B cell (primary cell): ENCODE measurements at regions of chr9 and their contacts with region 1.

Region 1: GRCh38 chr9:126611592-126612325 is 2.0 kb upstream of the LMX1B start:
- DNase-seq: peak; percentile 82
- ATAC-seq: peak; percentile 80
- H3K4me3 ChIP-seq: peak overlapping the region in 3 of 5 experiments; percentile 12 to 52 (median 16)
- H3K4me3 Mint-ChIP-seq: peak overlapping the region; percentile 76
- H3K27ac ChIP-seq: no peak overlapping the region
- H3K27ac Mint-ChIP-seq: peak overlapping the region; percentile 0
- H3K4me1 ChIP-seq: peaks cover 35 to 48% of the 10 kb centered on the region in 2 donors
- H3K4me1 Mint-ChIP-seq: peaks cover 31% of the 10 kb centered on the region
- H3K27me3 ChIP-seq: peaks cover 0 to 77% (median 45%) of the 10 kb centered on the region in 4 experiments
- H3K27me3 Mint-ChIP-seq: peaks cover 58% of the 10 kb centered on the region
- CTCF ChIP-seq: peak; percentile 89

Region 2: DNA sequence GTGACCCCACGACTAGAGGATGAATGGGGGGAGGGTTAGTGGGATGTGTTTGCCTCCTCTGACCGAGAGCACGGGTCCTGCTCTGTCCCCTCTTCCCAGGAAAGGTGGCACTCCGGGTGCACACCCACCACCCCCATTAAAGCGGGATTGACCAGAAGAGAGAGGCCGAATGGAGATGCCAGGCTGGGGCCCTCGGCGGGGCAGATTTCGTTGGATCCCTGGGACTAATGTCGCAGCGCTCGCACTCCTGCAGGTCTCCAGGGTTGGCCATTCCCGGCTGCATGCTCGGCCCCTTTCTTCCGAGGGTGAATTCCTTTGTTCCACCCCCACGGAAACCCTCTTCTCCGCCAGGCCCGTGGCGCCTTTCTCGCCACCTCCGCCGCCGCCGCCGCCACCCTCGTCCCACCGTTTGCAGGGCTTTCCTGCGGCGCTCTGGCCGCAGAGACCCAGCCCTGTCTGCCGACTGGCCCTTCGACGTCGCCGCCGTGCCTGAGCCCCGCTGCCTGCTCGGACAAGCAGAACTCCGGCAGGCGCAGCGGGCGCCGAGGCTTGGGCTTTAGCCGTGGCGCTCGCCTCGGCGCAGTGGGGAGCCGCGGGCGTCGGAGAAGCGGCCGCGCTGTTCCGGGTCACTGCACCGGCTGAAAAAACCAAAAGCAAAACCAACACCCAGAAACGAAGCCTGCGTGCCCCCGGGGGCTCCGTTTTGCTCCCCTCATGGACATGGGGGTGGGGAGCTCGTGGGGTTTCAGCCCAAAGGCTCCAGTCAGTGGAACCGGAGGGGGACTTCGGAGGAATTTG is 13.8 kb after region 1 on chr9:
- CTCF ChIA-PET with region 1: interaction called, 5 read pairs
- POLR2A ChIA-PET with region 1: no interaction called
- intact Hi-C with region 1: loop called (anchors 2 kb)
- DNase-seq: peak; percentile 53
- ATAC-seq: peak; percentile 37
- H3K4me3 ChIP-seq: peak overlapping the region in 4 of 5 experiments; percentile 39 to 63 (median 54)
- H3K4me3 Mint-ChIP-seq: peak overlapping the region; percentile 89
- H3K27ac ChIP-seq: no peak overlapping the region
- H3K27ac Mint-ChIP-seq: no peak overlapping the region
- H3K4me1 ChIP-seq: peaks cover 30 to 45% of the 10 kb centered on the region in 2 donors
- H3K4me1 Mint-ChIP-seq: peaks cover 16% of the 10 kb centered on the region
- H3K27me3 ChIP-seq: peaks cover 0 to 97% (median 71%) of the 10 kb centered on the region in 4 experiments
- H3K27me3 Mint-ChIP-seq: peaks cover 72% of the 10 kb centered on the region
- CTCF ChIP-seq: no peak

Region 3: GRCh38 chr9:126630458-126631237 is 18.9 kb after region 1 on chr9:
- CTCF ChIA-PET with region 1: no interaction called
- POLR2A ChIA-PET with region 1: interaction called, 10 read pairs
- intact Hi-C with region 1: loop called (anchors 2 kb)
- DNase-seq: no peak
- ATAC-seq: peak; percentile 52
- H3K4me3 ChIP-seq: no peak overlapping the region
- H3K4me3 Mint-ChIP-seq: no peak overlapping the region
- H3K27ac ChIP-seq: no peak overlapping the region
- H3K27ac Mint-ChIP-seq: no peak overlapping the region
- H3K4me1 ChIP-seq: peaks cover 18 to 23% of the 10 kb centered on the region in 2 donors
- H3K4me1 Mint-ChIP-seq: peaks cover 9% of the 10 kb centered on the region
- H3K27me3 ChIP-seq: peaks cover 0 to 89% (median 48%) of the 10 kb centered on the region in 4 experiments
- H3K27me3 Mint-ChIP-seq: peaks cover 65% of the 10 kb centered on the region
- CTCF ChIP-seq: no peak

Region 4: GRCh38 chr9:126673689-126674364 is 62.1 kb after region 1 on chr9:
- CTCF ChIA-PET with region 1: no interaction called
- POLR2A ChIA-PET with region 1: no interaction called
- intact Hi-C with region 1: no loop called
- DNase-seq: no peak
- ATAC-seq: no peak
- H3K4me3 ChIP-seq: no peak overlapping the region
- H3K4me3 Mint-ChIP-seq: no peak overlapping the region
- H3K27ac ChIP-seq: no peak overlapping the region
- H3K27ac Mint-ChIP-seq: no peak overlapping the region
- H3K4me1 ChIP-seq: peaks cover 0 to 15% of the 10 kb centered on the region in 2 donors
- H3K4me1 Mint-ChIP-seq: peaks cover 7% of the 10 kb centered on the region
- H3K27me3 ChIP-seq: peaks cover 0 to 85% (median 38%) of the 10 kb centered on the region in 4 experiments
- H3K27me3 Mint-ChIP-seq: peaks cover 51% of the 10 kb centered on the region
- CTCF ChIP-seq: no peak

Region 5: DNA sequence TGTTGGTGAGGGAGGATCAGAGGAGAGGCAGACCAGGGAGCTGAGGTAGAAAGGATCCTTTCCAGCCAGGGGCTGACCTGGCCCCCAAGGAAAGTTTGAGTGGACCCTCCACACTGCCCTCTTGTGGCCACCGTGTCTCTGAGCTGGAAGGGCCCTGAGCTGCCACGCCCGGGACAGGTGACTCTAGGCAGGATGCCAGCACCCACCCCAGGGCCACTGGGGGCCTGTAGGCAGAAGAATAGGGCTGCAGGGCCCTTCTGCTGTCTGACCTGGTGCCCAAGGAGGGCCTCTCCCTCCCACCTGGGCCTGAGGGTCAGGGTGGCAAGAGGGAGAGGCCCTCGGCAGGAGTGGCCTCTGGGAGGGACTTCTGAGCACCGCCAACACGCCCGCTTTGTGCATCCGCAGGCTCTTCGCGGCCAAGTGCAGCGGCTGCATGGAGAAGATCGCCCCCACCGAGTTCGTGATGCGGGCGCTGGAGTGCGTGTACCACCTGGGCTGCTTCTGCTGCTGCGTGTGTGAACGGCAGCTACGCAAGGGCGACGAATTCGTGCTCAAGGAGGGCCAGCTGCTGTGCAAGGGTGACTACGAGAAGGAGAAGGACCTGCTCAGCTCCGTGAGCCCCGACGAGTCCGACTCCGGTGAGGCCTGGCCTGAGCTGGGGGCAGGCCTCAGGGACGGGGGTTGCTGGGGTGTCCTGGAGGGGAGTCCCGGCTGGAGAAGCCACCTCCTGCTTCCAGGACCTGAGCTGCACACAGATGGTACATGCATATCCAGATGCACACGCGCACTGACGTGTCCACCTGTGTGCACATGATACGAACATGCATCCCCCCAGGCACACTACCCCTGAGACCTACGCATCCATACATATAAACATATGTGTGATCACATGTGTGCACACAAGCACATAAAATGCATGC is 78.9 kb after region 1 on chr9:
- CTCF ChIA-PET with region 1: interaction called, 3 read pairs
- POLR2A ChIA-PET with region 1: no interaction called
- intact Hi-C with region 1: loop called (anchors 1 kb)
- DNase-seq: peak; percentile 61
- ATAC-seq: peak; percentile 60
- H3K4me3 ChIP-seq: no peak overlapping the region
- H3K4me3 Mint-ChIP-seq: no peak overlapping the region
- H3K27ac ChIP-seq: no peak overlapping the region
- H3K27ac Mint-ChIP-seq: no peak overlapping the region
- H3K4me1 ChIP-seq: no peaks in the 10 kb centered on the region
- H3K4me1 Mint-ChIP-seq: no peaks in the 10 kb centered on the region
- H3K27me3 ChIP-seq: peaks cover 0 to 44% (median 2%) of the 10 kb centered on the region in 4 experiments
- H3K27me3 Mint-ChIP-seq: peaks cover 29% of the 10 kb centered on the region
- CTCF ChIP-seq: peak; percentile 73